ENCODE measurements at regions of chr1 and their contacts with region 1.

Region 1: DNA sequence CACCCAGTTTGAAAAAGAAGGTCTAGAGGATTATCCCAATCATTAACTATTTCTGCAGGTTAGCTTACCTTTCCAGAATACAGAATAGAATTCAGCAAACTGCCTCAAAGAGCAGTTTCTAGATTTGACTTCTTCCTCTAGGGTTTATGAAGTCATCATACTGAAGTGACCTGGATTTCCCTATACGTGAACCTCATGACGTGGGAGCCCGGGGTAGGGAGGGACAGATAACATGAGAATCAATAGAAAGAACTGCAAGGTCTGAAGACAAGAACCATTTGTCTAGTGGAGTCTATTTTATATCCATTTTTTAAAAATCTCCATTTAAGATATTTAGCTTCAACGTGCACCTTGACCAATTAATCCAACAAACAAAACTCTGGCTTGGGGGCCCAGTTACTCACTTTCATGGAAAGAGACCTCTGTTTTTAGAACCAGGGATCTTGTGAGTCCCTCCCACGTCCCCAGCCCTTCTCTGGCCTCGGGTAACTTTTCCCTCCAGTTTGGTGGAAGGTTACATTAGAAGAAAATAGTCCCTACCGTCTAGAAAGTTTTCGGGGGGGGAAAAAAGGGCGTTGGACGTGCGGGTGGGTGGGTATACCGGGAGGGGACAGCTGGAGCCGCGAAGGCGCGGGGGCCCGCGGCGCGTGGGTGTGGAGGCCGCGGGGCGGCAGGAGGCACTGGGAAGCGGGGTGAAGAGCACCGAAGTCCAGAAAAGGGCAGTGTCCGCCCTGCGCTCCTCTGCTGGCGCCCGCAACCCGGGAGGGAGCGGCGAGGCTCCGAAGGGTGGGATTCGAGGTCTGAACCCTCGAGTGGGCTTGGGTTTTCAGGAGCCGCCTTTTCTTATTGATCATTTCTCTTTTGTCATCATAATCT is 13.8 kb upstream of the POGZ start:
- DNase-seq: no peak

Region 2: GRCh38 chr1:151459331-151460046 is 13.6 kb before region 1 on chr1 and contains the start of gene POGZ:
- CTCF ChIA-PET with region 1: no interaction called
- POLR2A ChIA-PET with region 1: interaction called, 22 read pairs
- DNase-seq: peak; percentile 95

Measured in HEK293T (cell line).